Tibial artery (tissue), 4 donors: ENCODE measurements at regions of chr3 and their contacts with region 1.

Region 1: GRCh38 chr3:63818281-63819150 is 583 bp upstream of the C3orf49 start:
- DNase-seq: peak; percentile 62 to 66
- H3K4me3 ChIP-seq: no peak overlapping the region
- H3K27ac ChIP-seq: no peak overlapping the region
- H3K4me1 ChIP-seq: no peaks in the 10 kb centered on the region
- H3K27me3 ChIP-seq: no peaks in the 10 kb centered on the region
- CTCF ChIP-seq: peak; percentile 71 to 79

Region 2: GRCh38 chr3:62622553-62623193 is 1195.8 kb before region 1 on chr3:
- intact Hi-C with region 1: loop called (anchors 10 kb)
- DNase-seq: no peak
- H3K4me3 ChIP-seq: no peak overlapping the region
- H3K27ac ChIP-seq: no peak overlapping the region
- H3K4me1 ChIP-seq: no peaks in the 10 kb centered on the region
- H3K27me3 ChIP-seq: peaks cover 0 to 7% of the 10 kb centered on the region in 2 donors
- CTCF ChIP-seq: peak; percentile 58 to 61

Region 3: DNA sequence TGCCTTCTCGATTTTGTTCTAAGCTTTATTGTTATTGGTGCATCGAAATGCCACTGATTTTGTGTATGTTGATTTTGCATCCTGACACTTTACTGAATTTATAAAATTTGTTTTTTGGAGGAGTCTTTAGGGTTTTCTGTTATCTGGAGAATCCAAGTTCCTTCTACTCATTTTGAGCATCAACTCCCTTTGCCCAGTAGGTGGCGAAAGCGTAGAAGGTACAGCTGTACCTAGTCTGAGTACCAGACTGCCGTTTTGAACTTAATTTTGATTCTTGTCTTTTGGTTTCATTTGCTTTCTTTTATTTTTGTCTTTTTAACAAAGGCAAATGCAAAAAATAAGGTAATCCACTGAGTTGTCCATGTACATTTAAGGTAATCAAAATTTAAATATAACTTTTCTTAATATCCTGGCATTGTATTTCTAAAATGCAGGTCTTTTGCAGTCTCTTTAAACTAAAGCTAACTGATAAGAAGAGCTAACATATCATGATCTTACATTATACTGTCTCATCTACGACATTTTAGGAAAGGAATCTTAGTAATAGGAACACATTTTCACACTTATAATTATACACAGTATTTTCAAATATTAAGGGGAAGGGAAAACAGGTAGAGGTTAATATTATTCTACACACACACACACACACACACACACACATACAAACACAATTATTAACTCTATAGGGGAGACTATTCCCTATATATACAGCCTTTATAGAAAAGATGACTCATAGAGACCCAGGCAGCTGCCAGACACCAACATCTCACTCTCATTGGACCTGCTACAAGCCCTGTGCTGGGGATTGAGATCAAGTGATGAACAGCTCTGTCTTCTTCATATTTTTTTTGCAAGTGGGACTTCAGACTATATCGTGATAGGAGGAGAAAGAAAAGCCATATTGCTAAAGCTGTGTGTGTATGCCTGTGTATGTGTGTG is 468.7 kb before region 1 on chr3:
- intact Hi-C with region 1: loop called (anchors 5 kb)
- DNase-seq: no peak
- H3K4me3 ChIP-seq: no peak overlapping the region
- H3K27ac ChIP-seq: no peak overlapping the region
- H3K4me1 ChIP-seq: no peaks in the 10 kb centered on the region
- H3K27me3 ChIP-seq: peaks cover 0 to 20% of the 10 kb centered on the region in 2 donors
- CTCF ChIP-seq: peak; percentile 44 to 62

Region 4: GRCh38 chr3:63807961-63808565 is 10.5 kb before region 1 on chr3:
- intact Hi-C with region 1: no loop called
- DNase-seq: no peak
- H3K4me3 ChIP-seq: no peak overlapping the region
- H3K27ac ChIP-seq: no peak overlapping the region
- H3K4me1 ChIP-seq: no peaks in the 10 kb centered on the region
- H3K27me3 ChIP-seq: no peaks in the 10 kb centered on the region
- CTCF ChIP-seq: no peak

Region 5: DNA sequence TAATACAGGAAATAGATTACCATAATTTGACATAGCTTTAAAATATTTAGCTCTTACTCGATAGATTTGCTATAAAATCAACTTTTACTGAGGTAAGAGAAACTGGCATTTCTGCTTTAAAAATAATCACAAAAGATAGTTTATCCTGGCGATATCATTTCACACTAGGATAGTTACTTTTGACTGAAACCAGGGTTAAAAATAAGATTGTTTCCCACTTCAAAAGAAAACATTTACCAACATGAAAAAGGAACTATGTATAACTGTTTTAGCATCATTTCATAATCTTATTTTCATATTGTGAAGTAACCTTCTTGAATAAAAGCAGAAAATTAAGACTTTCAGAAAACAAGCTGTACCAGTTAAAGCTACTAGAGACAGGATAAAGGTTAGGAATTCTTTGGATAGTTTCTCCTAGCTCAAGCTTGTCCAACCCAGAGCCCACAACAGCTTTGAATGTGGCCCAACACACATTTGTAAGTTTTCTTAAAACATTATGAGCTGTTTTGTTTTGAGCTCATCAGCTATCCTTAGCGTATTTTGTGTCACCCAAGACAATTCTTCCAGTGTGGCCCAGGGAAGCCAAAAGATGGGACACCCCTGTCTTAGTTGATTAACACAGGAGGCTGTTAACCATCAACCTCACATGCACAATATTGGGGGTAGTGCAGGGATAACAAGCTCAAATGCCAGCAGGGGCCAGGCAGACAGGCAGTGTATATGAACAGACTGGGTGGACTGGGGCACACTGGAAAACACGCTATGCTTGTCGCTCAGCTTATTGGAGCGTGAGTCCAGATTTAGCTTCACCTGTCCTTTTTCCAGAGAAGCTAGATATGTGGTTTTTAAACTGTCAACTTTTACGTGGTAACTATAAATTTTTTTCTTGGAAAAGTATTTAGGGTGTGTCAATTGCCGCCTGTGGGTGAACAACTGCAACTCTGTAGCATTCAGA is 189.8 kb after region 1 on chr3:
- intact Hi-C with region 1: no loop called
- DNase-seq: no peak
- H3K4me3 ChIP-seq: no peak overlapping the region
- H3K27ac ChIP-seq: peak overlapping the region in 1 of 2 donors; percentile 42
- H3K4me1 ChIP-seq: peaks cover 0 to 35% (median 5%) of the 10 kb centered on the region in 4 donors
- H3K27me3 ChIP-seq: no peaks in the 10 kb centered on the region
- CTCF ChIP-seq: no peak